ENCODE measurements at regions of chr19 and their contacts with region 1.

Region 1: GRCh38 chr19:9354651-9355050 is 8.2 kb upstream of the ZNF177 start:
- DNase-seq: no peak
- ATAC-seq: no peak
- H3K4me3 ChIP-seq: no peak overlapping the region
- H3K4me3 Mint-ChIP-seq: no peak overlapping the region
- H3K27ac ChIP-seq: no peak overlapping the region
- H3K27ac Mint-ChIP-seq: no peak overlapping the region
- H3K4me1 ChIP-seq: no peaks in the 10 kb centered on the region
- H3K4me1 Mint-ChIP-seq: no peaks in the 10 kb centered on the region
- H3K27me3 ChIP-seq: no peaks in the 10 kb centered on the region
- H3K27me3 Mint-ChIP-seq: no peaks in the 10 kb centered on the region

Region 2: DNA sequence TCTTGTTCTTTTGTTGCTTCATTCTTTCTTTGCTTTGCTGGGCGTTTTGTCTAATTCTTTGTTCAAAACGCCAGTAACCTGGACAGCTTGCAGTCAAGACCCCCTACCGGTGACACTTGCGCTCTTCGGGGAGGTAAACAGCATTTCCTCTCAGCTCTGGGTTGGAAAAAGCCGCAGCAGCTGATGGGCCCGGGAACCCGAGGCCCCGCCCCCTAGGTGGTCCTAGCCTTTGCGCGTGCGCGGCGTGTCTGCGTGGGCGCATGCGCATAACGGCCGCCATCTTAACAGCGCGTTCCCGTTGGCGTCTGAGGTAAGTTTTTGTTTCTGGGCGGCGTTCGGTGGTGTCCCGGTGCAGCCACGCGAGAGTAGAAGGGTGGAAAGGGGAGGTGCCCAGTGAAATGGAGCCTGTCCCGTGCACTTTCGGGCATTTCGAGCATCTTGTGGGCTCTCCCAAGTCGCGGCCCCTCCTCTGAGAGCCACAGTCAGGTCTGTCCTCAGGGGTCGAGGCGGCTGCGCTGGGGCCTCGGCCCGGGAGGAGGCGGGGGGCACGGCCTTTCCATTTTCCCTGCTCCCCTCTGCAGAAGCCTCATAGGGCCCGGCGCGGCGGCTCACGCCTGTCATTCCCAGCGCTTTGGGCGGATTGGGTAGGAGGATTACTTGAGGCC is 30.6 kb before region 1 on chr19 and contains the start of gene ZNF559:
- CTCF ChIA-PET with region 1: no interaction called
- POLR2A ChIA-PET with region 1: no interaction called
- DNase-seq: peak; percentile 91 to 99 (median 96)
- ATAC-seq: peak; percentile 95 to 97 (median 96)
- H3K4me3 ChIP-seq: peak within 1 kb of the TSS; percentile 71 to 73
- H3K4me3 Mint-ChIP-seq: peak within 1 kb of the TSS; percentile 84 to 95 (median 90)
- H3K27ac ChIP-seq: peak within 1 kb of the TSS; percentile 78
- H3K27ac Mint-ChIP-seq: peak within 1 kb of the TSS; percentile 97
- H3K4me1 ChIP-seq: peaks cover 4 to 21% of the 10 kb centered on the region in 2 experiments
- H3K4me1 Mint-ChIP-seq: peaks cover 29 to 33% (median 31%) of the 10 kb centered on the region in 3 donors
- H3K27me3 ChIP-seq: no peaks in the 10 kb centered on the region
- H3K27me3 Mint-ChIP-seq: no peaks in the 10 kb centered on the region
- total RNA-seq, gene ZNF559: 14.5 to 41.1 (median 34.7) TPM

Region 3: DNA sequence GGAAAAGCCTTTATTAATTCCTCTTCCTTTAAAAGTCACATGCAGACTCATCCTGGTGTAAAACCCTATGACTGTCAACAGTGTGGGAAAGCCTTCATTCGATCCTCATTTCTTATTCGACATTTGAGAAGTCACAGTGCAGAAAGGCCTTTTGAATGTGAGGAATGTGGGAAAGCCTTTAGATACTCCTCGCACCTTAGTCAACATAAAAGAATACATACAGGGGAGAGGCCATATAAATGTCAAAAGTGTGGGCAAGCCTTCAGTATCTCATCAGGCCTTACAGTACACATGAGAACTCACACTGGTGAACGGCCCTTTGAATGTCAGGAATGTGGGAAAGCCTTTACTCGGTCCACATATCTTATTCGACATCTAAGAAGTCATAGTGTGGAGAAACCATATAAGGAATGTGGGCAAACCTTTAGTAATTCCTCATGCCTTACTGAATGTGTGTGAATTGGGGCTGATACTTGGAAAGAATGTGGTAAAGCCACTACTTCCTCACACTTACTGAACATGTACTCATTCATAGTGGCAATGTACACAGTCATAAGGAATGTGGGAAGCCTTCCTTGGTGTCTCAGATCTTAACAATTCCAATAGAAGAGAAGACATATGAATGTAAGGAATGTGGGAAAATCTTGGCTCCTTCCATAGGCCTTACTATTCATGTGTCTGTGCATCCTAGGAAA is 11.9 kb before region 1 on chr19:
- CTCF ChIA-PET with region 1: no interaction called
- POLR2A ChIA-PET with region 1: interaction called in 1 of 2 experiments, 11 read pairs
- DNase-seq: no peak
- ATAC-seq: no peak
- H3K4me3 ChIP-seq: peak overlapping the region in 1 of 2 donors; percentile 32
- H3K4me3 Mint-ChIP-seq: no peak overlapping the region
- H3K27ac ChIP-seq: no peak overlapping the region
- H3K27ac Mint-ChIP-seq: no peak overlapping the region
- H3K4me1 ChIP-seq: no peaks in the 10 kb centered on the region
- H3K4me1 Mint-ChIP-seq: no peaks in the 10 kb centered on the region
- H3K27me3 ChIP-seq: no peaks in the 10 kb centered on the region
- H3K27me3 Mint-ChIP-seq: no peaks in the 10 kb centered on the region